SK-N-SH (cell line): ENCODE measurements at regions of chr2 and their contacts with region 1.

Region 1: DNA sequence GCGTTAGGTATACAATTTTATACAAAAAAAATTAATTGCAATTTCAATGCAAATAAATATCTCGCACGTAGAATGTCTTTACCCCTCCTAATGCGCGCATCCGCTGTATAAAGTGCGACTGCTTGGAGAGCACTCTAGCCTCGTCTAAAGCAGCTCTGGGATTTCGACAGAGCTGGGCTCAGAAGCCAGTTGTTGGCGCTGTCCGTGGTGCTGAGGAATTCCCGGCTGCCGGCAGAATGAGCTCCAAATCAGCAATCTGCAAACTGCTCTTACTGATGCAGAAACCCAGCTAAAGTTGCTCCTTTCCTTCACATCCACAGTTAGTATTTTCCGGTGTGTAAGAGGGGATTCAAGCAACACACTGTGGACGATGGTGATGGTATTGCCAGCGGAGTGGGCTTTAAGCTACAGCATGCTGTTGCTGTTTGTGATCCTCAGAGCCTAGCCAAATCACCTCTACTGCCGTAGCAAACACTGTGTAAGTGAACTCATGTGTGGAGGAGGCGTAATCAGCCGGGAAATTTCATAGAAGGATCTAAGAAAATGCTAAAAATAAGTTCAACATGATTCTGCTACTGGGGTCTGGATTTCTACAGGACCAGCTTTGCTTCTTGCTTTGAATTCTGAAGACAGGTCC is at the start of gene VWC2L:
- DNase-seq: peak; percentile 43
- H3K4me3 ChIP-seq: peak within 1 kb of the TSS in 1 of 2 experiments; percentile 33; a peak in 1 of 4 replicates
- H3K27ac ChIP-seq: no peak within 1 kb of the TSS
- H3K4me1 ChIP-seq: no peaks in the 10 kb centered on the region; a peak in 2 of 4 replicates
- H3K27me3 ChIP-seq: no peaks in the 10 kb centered on the region
- CTCF ChIP-seq: no peak
- EP300 ChIP-seq: no peak
- RAD21 ChIP-seq: peak; percentile 43
- polyA plus RNA-seq, gene VWC2L: not detected in 2 replicates

Region 2: DNA sequence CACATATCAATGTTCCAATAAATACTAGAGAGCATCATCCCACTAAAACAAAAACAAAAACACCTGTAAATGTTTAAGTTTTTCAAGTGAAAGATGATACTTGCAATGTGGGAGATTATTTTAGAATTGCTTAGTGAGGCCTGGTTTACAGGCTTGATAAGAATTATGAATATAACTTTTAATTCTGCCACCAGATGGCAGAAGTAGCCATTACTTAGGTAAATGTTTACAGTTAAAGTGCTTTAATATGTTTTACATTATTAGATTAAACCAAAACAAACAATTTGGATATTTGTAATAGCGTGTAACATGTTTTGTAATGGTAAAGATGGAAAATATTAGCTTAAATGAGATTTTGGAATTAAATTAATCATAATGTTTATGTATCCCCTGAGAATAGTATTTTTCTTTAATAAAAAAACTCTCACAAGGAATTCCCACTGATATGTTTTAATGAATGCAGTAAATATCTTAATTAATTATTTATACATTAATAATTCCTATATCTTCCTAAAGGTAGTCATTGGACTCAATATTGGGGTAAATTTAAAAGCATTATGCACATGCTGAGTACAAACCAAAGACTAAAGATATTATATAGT is 604.8 kb before region 1 on chr2:
- CTCF ChIA-PET with region 1: interaction called, 11 read pairs
- POLR2A ChIA-PET with region 1: no interaction called
- DNase-seq: peak; percentile 27
- H3K4me3 ChIP-seq: no peak overlapping the region
- H3K27ac ChIP-seq: no peak overlapping the region
- H3K4me1 ChIP-seq: no peaks in the 10 kb centered on the region
- H3K27me3 ChIP-seq: no peaks in the 10 kb centered on the region
- CTCF ChIP-seq: peak; percentile 71
- EP300 ChIP-seq: no peak
- RAD21 ChIP-seq: peak; percentile 67

Region 3: DNA sequence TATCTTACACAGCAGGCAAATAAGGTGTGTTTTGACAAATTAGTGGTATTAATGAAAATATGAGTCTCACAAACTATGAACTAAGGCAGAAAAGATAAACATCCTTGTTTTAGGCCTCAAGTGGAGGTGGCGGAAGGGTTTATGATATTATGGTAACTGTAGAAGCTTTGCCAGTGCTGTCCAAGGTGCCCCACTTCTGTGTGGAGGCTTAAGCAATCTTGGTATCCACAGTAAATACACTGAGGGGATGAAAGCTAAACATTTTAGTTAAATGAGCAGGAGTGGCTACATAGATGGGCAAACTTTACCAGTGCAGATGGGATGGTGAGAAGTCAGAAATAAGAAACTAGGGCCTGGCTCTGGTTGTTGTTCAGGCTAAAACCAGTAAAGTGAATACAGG is 313.7 kb after region 1 on chr2:
- CTCF ChIA-PET with region 1: no interaction called
- POLR2A ChIA-PET with region 1: no interaction called
- DNase-seq: no peak
- H3K4me3 ChIP-seq: no peak overlapping the region
- H3K27ac ChIP-seq: no peak overlapping the region
- H3K4me1 ChIP-seq: no peaks in the 10 kb centered on the region; a peak in 1 of 4 replicates
- H3K27me3 ChIP-seq: no peaks in the 10 kb centered on the region
- CTCF ChIP-seq: no peak
- EP300 ChIP-seq: no peak
- RAD21 ChIP-seq: no peak